Activated B cell treated with CpG ODN at 0.5 μM for 24 hours (primary cell): ENCODE measurements at regions of chrX and their contacts with region 1.

Region 1: GRCh38 chrX:154748712-154749343 is 2.0 kb downstream of the GAB3 start:
- DNase-seq: no peak
- ATAC-seq: peak; percentile 51
- H3K4me3 Mint-ChIP-seq: no peak overlapping the region
- H3K27ac Mint-ChIP-seq: no peak overlapping the region
- H3K4me1 Mint-ChIP-seq: peaks cover 21% of the 10 kb centered on the region
- H3K27me3 Mint-ChIP-seq: no peaks in the 10 kb centered on the region
- CTCF ChIP-seq: peak; percentile 31

Region 2: DNA sequence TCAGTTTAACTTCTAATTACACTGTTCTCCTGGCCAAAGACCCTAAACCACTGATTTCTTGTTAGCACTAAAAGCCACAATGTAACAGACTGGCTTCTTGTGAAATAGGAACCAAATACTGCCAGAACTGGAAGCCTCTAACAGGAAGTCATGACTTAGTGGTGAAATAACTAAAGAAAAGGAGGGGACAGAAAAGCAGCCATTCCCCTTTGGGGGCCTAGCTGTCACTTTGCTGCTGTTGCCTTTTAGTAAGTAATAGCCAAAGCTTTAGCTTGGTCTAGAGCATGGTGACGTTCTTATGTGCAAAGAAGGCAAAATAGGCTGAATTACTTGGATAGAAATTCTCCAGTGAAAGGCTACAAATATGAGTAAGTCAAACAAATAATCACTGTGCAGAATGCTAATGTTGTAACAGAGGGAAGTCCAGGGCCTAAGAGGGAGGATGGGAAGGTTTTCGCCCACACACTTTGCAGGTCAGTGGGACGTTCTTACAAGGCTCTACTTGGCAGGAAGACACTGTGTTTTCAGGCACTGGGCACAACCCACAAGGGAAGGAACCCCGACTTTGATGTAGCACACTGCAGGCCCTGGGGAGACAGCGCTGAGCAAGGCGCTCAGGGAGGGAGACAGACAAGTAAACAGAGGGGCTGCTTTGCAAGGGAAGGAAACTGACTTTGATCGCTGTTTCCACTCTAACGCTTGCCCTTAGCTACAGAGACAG is 14.6 kb before region 1 on chrX:
- CTCF ChIA-PET with region 1: interaction called, 12 read pairs
- POLR2A ChIA-PET with region 1: interaction called, 3 read pairs
- intact Hi-C with region 1: no loop called
- DNase-seq: no peak
- ATAC-seq: peak; percentile 67
- H3K4me3 Mint-ChIP-seq: peak overlapping the region; percentile 52
- H3K27ac Mint-ChIP-seq: peak overlapping the region; percentile 91
- H3K4me1 Mint-ChIP-seq: peaks cover 60% of the 10 kb centered on the region
- H3K27me3 Mint-ChIP-seq: no peaks in the 10 kb centered on the region
- CTCF ChIP-seq: no peak

Region 3: GRCh38 chrX:154840856-154841255 is 92.0 kb after region 1 on chrX:
- CTCF ChIA-PET with region 1: interaction called, 7 read pairs
- POLR2A ChIA-PET with region 1: no interaction called
- intact Hi-C with region 1: loop called (anchors 1 kb)
- DNase-seq: no peak
- ATAC-seq: peak; percentile 66
- H3K4me3 Mint-ChIP-seq: no peak overlapping the region
- H3K27ac Mint-ChIP-seq: no peak overlapping the region
- H3K4me1 Mint-ChIP-seq: no peaks in the 10 kb centered on the region
- H3K27me3 Mint-ChIP-seq: no peaks in the 10 kb centered on the region
- CTCF ChIP-seq: no peak